Ascending aorta (tissue), 2 donors: ENCODE measurements at regions of chr10 and their contacts with region 1.

Region 1: DNA sequence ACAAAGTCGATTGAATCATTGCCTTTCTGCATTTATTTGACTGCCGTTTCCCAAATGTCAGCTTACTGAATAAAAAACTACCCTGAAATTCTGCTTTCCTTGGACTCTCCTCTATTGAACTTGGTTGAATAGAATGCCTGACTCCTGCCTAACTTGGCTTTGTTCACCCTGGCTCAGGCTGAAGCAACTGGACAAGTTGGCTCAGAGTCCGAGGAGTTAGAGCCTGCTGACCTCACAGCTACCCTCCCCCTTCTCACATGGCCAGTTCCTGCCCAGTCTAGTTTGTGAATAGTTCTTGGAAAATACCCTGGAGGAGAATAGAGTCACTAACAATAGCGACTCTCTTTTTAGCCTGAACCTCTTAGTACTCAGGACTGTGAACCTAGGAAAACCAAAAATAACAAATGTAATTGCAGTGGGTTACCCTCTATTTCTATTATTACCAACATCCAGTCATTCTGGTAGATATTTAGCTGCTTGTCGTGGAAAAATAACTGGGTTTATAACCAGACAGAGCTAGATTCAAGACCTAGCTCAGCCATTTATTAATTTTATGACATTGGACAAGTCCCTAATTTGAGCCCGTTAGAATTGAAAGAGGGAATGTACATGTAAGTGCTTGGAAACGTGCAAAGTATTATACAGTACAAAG is 17.3 kb upstream of the NRBF2 start:
- DNase-seq: peak; percentile 85 to 96
- H3K4me3 ChIP-seq: no peak overlapping the region
- H3K27ac ChIP-seq: peak overlapping the region; percentile 66 to 80
- H3K4me1 ChIP-seq: peaks cover 5 to 17% of the 10 kb centered on the region in 2 donors
- H3K27me3 ChIP-seq: no peaks in the 10 kb centered on the region
- CTCF ChIP-seq: no peak

Region 2: GRCh38 chr10:62437696-62438095 is 678.2 kb before region 1 on chr10:
- intact Hi-C with region 1: loop called (anchors 10 kb)
- DNase-seq: no peak
- H3K4me3 ChIP-seq: no peak overlapping the region
- H3K27ac ChIP-seq: no peak overlapping the region
- H3K4me1 ChIP-seq: peaks cover 0 to 5% of the 10 kb centered on the region in 2 donors
- H3K27me3 ChIP-seq: no peaks in the 10 kb centered on the region
- CTCF ChIP-seq: peak; percentile 63 to 79 (median 69)

Region 3: GRCh38 chr10:63083904-63084689 is 31.8 kb before region 1 on chr10:
- intact Hi-C with region 1: loop called (anchors 2 kb)
- DNase-seq: peak in 1 of 2 donors; percentile 71
- H3K4me3 ChIP-seq: no peak overlapping the region
- H3K27ac ChIP-seq: peak overlapping the region in 1 of 2 donors; percentile 6
- H3K4me1 ChIP-seq: peaks cover 0 to 8% of the 10 kb centered on the region in 2 donors
- H3K27me3 ChIP-seq: no peaks in the 10 kb centered on the region
- CTCF ChIP-seq: peak; percentile 51 to 73 (median 59)

Region 4: DNA sequence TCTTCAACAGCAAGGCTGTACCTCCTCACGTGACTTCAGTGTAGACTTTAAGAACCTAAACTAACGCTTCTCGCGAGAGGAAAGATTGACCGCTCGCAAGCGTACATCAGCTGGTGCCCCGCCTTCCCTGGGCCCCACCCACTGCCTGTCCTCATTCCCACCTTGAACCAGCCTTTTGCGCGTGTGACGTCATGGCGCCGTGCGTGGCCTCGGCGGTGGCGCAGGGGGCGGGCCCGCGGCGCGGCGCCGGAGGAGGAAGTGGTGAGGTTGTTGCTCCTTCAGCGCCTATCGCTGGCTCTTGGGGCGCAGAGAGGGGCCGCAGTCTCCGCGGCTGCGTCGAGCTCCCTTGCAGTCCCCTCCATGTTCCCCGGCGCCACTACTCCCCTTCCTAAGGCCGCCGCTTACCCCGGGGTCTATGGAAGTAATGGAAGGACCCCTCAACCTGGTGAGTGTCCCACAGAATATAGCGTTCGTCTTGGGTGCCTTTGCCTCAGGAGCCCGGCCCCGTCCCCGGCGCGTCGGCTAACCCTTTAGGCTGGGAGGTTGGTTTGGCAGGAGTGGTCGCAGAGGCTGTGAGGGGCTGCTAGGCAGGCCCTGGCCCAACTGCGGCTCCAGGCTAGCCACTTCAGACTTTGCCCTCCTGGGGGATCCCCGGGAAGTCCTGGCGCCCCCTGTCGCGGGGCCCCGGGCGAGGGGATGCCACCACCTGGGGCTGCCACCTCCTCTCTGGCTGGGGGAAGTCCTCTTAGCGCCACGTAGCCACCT is 17.4 kb after region 1 on chr10 and contains the start of gene NRBF2:
- intact Hi-C with region 1: loop called (anchors 1 kb)
- DNase-seq: peak; percentile 95 to 99
- H3K4me3 ChIP-seq: peak within 1 kb of the TSS; percentile 97 to 99
- H3K27ac ChIP-seq: peak within 1 kb of the TSS; percentile 95 to 97
- H3K4me1 ChIP-seq: peaks cover 4 to 10% of the 10 kb centered on the region in 2 donors
- H3K27me3 ChIP-seq: no peaks in the 10 kb centered on the region
- CTCF ChIP-seq: peak in 1 of 3 experiments; percentile 21
- total RNA-seq, gene NRBF2: 4.2 TPM

Region 5: DNA sequence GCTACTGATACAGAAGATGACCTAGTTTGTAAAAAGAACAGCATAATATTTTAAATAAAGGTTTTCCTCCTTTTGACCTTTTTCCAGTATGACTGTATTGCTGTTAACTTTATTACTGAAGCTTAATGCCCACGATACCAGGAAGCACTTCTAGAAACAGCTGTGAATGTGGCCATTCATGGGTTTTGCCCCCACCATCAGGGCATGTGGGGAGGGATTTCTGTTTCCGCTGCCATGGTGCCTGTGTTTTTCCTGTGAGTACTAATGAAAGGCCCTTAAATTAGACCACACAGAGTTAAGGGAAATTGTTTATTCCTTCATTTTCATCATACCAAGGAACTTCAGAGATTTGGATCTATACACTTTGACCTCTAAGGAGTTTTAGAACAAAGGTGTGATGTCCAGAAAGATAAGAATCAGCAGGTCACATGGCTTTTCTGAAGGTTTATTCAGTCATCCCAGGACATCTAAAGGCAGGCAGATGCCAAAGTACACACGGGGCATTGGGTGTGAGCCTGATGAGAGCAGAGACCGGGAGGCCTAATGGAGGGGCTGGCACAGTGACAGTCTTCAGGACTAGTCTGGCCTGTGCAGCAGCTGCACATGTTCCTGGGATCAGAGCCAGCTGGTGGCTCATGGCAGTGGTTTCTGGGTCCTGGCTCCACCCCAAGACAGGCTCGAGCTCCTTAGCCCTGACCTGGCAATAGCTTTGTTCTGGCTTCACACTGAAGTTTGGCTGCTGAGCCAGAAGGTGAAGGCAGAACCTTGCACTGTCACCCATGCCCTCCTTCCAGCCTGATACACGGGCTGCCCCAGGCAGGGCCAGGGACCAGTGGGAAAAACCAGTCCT is 596.2 kb after region 1 on chr10:
- intact Hi-C with region 1: loop called (anchors 5 kb)
- DNase-seq: peak; percentile 89 to 98
- H3K4me3 ChIP-seq: peak overlapping the region in 1 of 2 donors; percentile 2
- H3K27ac ChIP-seq: peak overlapping the region; percentile 89 to 91
- H3K4me1 ChIP-seq: peaks cover 8 to 42% of the 10 kb centered on the region in 2 donors
- H3K27me3 ChIP-seq: no peaks in the 10 kb centered on the region
- CTCF ChIP-seq: no peak